Dendritic cell treated with granulocyte-macrophage colony-stimulating factor and Interleukin-4, amounts not matched to agents 40 ng/mL and 50 ng/mL, for 4 days (primary cell): ENCODE measurements at regions of chr14 and their contacts with region 1.

Region 1: GRCh38 chr14:28294834-28295440 is 471.6 kb upstream of the FOXG1 start:
- H3K4me3 Mint-ChIP-seq: no peak overlapping the region
- H3K27ac Mint-ChIP-seq: no peak overlapping the region
- H3K4me1 Mint-ChIP-seq: no peaks in the 10 kb centered on the region
- H3K27me3 Mint-ChIP-seq: no peaks in the 10 kb centered on the region

Region 2: GRCh38 chr14:28608851-28609828 is 314.2 kb after region 1 on chr14:
- intact Hi-C with region 1: loop called (anchors 2 kb)
- H3K4me3 Mint-ChIP-seq: no peak overlapping the region
- H3K27ac Mint-ChIP-seq: no peak overlapping the region
- H3K4me1 Mint-ChIP-seq: no peaks in the 10 kb centered on the region
- H3K27me3 Mint-ChIP-seq: no peaks in the 10 kb centered on the region